ENCODE measurements at regions of chr2 and their contacts with region 1.

Region 1: GRCh38 chr2:96186562-96186961 is 22.1 kb downstream of the STARD7 start:
- DNase-seq: no peak
- H3K4me3 ChIP-seq: no peak overlapping the region
- H3K4me3 Mint-ChIP-seq: no peak overlapping the region
- H3K27ac Mint-ChIP-seq: peak overlapping the region; percentile 39
- H3K4me1 ChIP-seq: peaks cover 25% of the 10 kb centered on the region
- H3K4me1 Mint-ChIP-seq: peaks cover 20% of the 10 kb centered on the region
- H3K27me3 ChIP-seq: no peaks in the 10 kb centered on the region
- H3K27me3 Mint-ChIP-seq: no peaks in the 10 kb centered on the region
- CTCF ChIP-seq: no peak

Region 2: DNA sequence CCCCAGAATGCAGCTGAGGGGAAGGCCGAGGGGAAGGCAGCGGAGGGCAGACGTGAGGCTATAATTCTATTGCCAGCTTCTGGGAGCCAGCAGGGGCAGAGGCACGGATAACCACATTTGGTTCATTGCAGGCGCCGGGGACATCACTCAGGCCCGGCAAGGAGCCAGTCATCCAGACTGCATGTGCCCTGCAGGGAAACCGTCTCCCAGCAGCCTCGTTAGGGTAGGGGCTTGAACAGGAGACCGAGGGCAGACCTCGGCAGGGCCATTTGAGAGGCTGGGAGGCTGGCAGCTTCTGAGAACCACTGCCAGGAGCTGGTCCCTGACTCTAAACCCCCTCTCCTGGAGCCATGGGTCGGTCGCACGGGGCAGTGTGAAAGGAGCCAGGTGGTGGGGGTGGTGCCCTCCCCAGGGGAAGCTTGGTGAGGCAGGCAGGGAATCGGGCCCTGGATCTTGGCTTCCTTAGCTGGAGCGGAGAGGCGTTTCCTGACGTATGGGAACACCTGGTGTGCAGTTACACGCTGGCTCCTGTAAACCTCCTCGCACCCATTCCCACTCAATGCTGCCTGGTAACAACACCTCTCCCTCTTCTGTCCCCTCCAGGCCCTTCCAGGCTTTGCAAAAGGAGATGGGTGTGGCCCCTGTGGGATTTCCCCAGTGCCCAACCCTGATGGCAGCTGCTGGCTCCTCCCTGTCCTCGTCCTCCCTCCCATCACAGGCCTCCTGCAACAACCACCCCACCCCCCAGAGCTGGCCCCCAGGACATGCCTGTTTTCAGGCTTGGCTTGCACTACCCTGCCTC is 94.8 kb before region 1 on chr2:
- CTCF ChIA-PET with region 1: no interaction called
- POLR2A ChIA-PET with region 1: no interaction called
- intact Hi-C with region 1: no loop called
- DNase-seq: peak in 1 of 2 experiments; percentile 47
- H3K4me3 ChIP-seq: no peak overlapping the region
- H3K4me3 Mint-ChIP-seq: no peak overlapping the region
- H3K27ac Mint-ChIP-seq: no peak overlapping the region
- H3K4me1 ChIP-seq: no peaks in the 10 kb centered on the region
- H3K4me1 Mint-ChIP-seq: no peaks in the 10 kb centered on the region
- H3K27me3 ChIP-seq: no peaks in the 10 kb centered on the region
- H3K27me3 Mint-ChIP-seq: no peaks in the 10 kb centered on the region
- CTCF ChIP-seq: no peak

Region 3: DNA sequence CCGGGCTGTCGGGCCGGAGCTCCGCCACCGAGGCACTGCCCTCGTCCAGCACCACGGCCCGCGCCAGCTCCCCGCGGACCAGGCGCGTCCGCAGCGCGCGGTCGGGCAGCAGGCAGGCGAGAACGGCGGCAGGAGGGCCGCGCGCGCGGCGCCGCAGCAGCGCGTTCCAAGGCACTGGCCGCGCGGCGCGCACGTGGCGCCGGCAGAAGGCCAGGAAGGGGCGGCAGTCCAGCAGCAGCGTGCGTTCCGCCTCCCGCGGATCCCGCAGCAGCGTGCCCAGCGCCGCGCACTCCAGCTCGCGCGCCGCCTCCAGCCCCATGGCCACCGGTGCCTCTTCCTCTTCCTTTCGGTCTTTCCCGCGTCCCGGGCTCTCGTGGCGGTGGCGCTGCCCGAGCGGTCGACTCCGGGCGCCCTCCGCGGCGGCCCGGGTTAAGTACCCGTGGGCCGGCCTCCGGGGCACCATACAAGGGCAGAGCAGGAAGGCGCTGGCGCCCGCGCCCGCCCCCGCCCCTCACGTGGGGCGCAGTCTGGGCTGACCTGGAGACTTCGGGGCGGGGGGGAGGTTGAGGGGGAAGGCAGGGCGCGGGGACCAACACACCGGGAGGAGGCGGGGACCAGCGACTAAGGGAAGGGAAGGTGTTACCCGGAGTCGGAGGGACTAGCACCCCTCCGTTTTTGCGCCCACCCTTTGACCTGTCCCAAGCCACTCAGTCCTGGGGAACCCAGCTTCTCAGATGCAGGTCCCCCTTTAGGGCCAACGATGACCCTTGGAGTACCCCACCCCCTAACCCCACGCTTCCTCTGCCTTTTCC is 41.3 kb before region 1 on chr2 and contains the start of gene DUSP2:
- CTCF ChIA-PET with region 1: no interaction called
- POLR2A ChIA-PET with region 1: no interaction called
- intact Hi-C with region 1: loop called (anchors 5 kb)
- DNase-seq: peak; percentile 84 to 89
- H3K4me3 ChIP-seq: peak within 1 kb of the TSS; percentile 70
- H3K4me3 Mint-ChIP-seq: peak within 1 kb of the TSS; percentile 98
- H3K27ac Mint-ChIP-seq: peak within 1 kb of the TSS; percentile 94
- H3K4me1 ChIP-seq: peaks cover 14% of the 10 kb centered on the region
- H3K4me1 Mint-ChIP-seq: no peaks in the 10 kb centered on the region
- H3K27me3 ChIP-seq: no peaks in the 10 kb centered on the region
- H3K27me3 Mint-ChIP-seq: no peaks in the 10 kb centered on the region
- CTCF ChIP-seq: peak in 1 of 2 experiments; percentile 5
- total RNA-seq, gene DUSP2: 13.4 and 13.6 TPM in 2 replicates

Region 4: GRCh38 chr2:96272004-96272403 is 85.4 kb after region 1 on chr2:
- CTCF ChIA-PET with region 1: no interaction called
- POLR2A ChIA-PET with region 1: interaction called, 10 read pairs
- intact Hi-C with region 1: loop called (anchors 5 kb)
- DNase-seq: no peak
- H3K4me3 ChIP-seq: no peak overlapping the region
- H3K4me3 Mint-ChIP-seq: no peak overlapping the region
- H3K27ac Mint-ChIP-seq: no peak overlapping the region
- H3K4me1 ChIP-seq: 0 out of 2 replicates have a peak, but pooled peaks cover 3% of the 10 kb centered on the region
- H3K4me1 Mint-ChIP-seq: no peaks in the 10 kb centered on the region
- H3K27me3 ChIP-seq: no peaks in the 10 kb centered on the region
- H3K27me3 Mint-ChIP-seq: no peaks in the 10 kb centered on the region
- CTCF ChIP-seq: no peak

Region 5: GRCh38 chr2:96344011-96344410 is 157.4 kb after region 1 on chr2:
- CTCF ChIA-PET with region 1: no interaction called
- POLR2A ChIA-PET with region 1: no interaction called
- intact Hi-C with region 1: no loop called
- DNase-seq: no peak
- H3K4me3 ChIP-seq: no peak overlapping the region
- H3K4me3 Mint-ChIP-seq: no peak overlapping the region
- H3K27ac Mint-ChIP-seq: no peak overlapping the region
- H3K4me1 ChIP-seq: peaks cover 14% of the 10 kb centered on the region
- H3K4me1 Mint-ChIP-seq: peaks cover 15% of the 10 kb centered on the region
- H3K27me3 ChIP-seq: no peaks in the 10 kb centered on the region
- H3K27me3 Mint-ChIP-seq: no peaks in the 10 kb centered on the region
- CTCF ChIP-seq: no peak

Measured in Caco-2 (cell line).